ENCODE measurements at regions of chr7 and their contacts with region 1.

Region 1: DNA sequence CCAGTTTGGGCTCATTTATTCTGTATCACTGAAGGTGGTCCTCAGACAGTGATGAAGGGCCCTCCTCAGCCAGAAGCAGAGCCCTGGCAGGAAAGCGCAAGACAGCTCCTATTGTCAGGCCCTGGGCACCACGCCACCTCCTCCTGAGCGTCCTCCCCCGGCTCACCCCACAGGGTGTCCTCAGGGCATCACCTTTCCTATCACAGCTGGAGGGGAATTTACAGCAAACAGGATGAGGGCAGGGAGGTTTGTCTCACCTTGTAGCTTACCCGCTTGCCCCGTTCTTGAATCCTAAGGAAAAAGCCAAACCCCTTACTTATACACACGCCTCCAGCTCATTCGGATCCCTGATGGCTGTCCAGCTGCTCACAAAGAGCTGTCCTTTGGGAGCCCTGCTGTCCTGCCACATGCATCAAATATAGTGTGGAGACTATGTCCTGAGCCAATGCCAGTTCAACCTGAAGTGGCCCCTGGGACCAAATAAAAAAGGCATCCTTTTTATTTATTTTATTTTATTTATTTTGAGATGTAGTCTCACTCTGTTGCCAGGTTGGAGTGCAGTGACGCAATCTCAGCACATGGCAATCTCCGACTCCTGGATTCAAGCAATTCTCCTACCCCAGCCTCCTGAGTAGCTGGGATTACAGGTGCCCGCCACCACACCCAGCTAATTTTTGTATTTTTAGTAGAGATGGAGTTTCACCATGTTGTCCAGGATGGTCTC is 50.0 kb upstream of the LANCL2 start:
- DNase-seq: no peak
- ATAC-seq: no peak
- H3K4me3 ChIP-seq: no peak overlapping the region
- H3K27ac ChIP-seq: no peak overlapping the region
- H3K4me1 ChIP-seq: no peaks in the 10 kb centered on the region
- H3K27me3 ChIP-seq: no peaks in the 10 kb centered on the region
- CTCF ChIP-seq: no peak

Region 2: GRCh38 chr7:55120481-55121198 is 194.5 kb before region 1 on chr7:
- intact Hi-C with region 1: no loop called
- DNase-seq: no peak
- ATAC-seq: peak; percentile 81 to 88 (median 84)
- H3K4me3 ChIP-seq: peak overlapping the region; percentile 11
- H3K27ac ChIP-seq: peak overlapping the region; percentile 83
- H3K4me1 ChIP-seq: peaks cover 65% of the 10 kb centered on the region
- H3K27me3 ChIP-seq: no peaks in the 10 kb centered on the region
- CTCF ChIP-seq: no peak

Region 3: DNA sequence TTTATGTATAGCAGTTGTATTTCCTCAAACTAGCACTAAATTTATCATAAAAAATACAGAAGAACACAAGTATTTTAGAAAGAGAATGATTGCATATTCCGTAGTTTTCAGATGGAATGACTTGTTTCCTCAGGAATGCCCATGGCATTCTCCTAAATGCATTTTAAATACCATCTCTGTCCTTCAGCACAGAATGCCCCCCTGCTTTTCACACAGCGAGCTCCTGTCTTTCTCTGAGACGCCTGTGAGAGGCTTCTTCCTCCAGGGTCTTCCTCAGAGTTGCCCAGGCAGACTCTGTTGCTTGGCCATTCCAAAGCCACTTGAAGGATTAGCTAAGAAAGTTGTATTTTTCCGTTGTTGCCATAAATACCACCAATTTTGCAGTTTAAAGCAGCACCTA is 60.1 kb after region 1 on chr7:
- intact Hi-C with region 1: loop called in 1 of 2 experiments (anchors 5 kb)
- DNase-seq: no peak
- ATAC-seq: no peak
- H3K4me3 ChIP-seq: no peak overlapping the region
- H3K27ac ChIP-seq: no peak overlapping the region
- H3K4me1 ChIP-seq: peaks cover 4% of the 10 kb centered on the region
- H3K27me3 ChIP-seq: no peaks in the 10 kb centered on the region
- CTCF ChIP-seq: no peak